ENCODE measurements at regions of chr16 and their contacts with region 1.

Region 1: DNA sequence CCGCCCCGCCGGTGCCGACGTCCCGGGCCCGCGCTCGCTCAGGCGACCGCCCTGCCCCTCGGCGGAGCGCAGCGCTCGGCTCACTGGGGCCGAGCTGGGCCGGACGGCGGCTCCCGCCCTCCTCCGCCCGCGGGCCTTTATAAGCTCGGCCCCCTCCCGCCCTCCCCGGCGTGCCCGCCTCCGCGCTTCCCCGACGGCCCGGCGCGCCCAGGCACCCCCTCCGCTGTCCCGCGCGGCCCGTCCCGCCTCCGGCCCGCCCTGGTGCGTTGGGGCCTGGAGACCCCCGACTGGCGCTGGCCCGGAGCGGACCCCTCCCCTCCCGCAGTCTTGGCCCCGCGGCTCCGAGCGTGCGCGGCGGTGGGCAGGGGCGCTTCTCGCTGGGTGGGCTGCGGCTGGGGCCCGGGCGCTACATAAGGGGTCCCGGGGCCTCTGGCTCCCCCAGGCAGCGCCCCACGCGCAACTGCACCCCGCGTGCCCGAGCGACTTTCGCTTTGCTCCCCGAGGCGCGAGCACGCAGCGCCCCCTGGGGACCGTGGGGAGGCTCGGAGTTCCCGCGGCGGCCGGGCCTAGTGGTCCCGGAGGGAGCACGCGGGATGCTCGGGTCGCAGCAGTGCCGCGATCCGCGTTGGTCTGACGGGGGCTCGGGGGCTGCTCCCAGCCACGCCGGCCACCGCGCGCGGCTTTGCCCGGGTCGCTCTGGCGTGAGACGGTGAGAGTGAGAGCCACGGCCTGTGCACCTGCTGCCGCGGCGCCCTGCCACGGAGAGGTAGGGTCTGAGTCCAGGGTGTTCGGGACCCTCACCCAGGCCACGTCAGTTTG is at the start of gene PIEZO1:
- DNase-seq: peak; percentile 77
- H3K4me3 Mint-ChIP-seq: peak within 1 kb of the TSS; percentile 65
- H3K27ac Mint-ChIP-seq: peak within 1 kb of the TSS; percentile 78
- H3K4me1 Mint-ChIP-seq: peaks cover 42% of the 10 kb centered on the region
- H3K27me3 Mint-ChIP-seq: no peaks in the 10 kb centered on the region
- total RNA-seq, gene PIEZO1: 78.2 to 80.1 TPM

Region 2: GRCh38 chr16:88650749-88651275 is 134.5 kb before region 1 on chr16 and contains the start of gene CYBA:
- CTCF ChIA-PET with region 1: no interaction called
- intact Hi-C with region 1: loop called (anchors 1 kb)
- DNase-seq: peak; percentile 91
- H3K4me3 Mint-ChIP-seq: peak within 1 kb of the TSS; percentile 87
- H3K27ac Mint-ChIP-seq: peak within 1 kb of the TSS; percentile 95
- H3K4me1 Mint-ChIP-seq: peaks cover 18% of the 10 kb centered on the region
- H3K27me3 Mint-ChIP-seq: no peaks in the 10 kb centered on the region
- total RNA-seq, gene CYBA: 167 to 180 TPM

Region 3: GRCh38 chr16:88700636-88701482 is 84.5 kb before region 1 on chr16:
- CTCF ChIA-PET with region 1: interaction called, 5 read pairs
- intact Hi-C with region 1: loop called (anchors 1 kb)
- DNase-seq: peak; percentile 98
- H3K4me3 Mint-ChIP-seq: peak overlapping the region; percentile 84
- H3K27ac Mint-ChIP-seq: peak overlapping the region; percentile 98
- H3K4me1 Mint-ChIP-seq: peaks cover 71% of the 10 kb centered on the region
- H3K27me3 Mint-ChIP-seq: no peaks in the 10 kb centered on the region

Region 4: GRCh38 chr16:88737298-88738150 is 47.8 kb before region 1 on chr16:
- CTCF ChIA-PET with region 1: interaction called, 48 read pairs
- intact Hi-C with region 1: loop called (anchors 1 kb)
- DNase-seq: peak; percentile 79
- H3K4me3 Mint-ChIP-seq: no peak overlapping the region
- H3K27ac Mint-ChIP-seq: no peak overlapping the region
- H3K4me1 Mint-ChIP-seq: peaks cover 3% of the 10 kb centered on the region
- H3K27me3 Mint-ChIP-seq: no peaks in the 10 kb centered on the region

Region 5: DNA sequence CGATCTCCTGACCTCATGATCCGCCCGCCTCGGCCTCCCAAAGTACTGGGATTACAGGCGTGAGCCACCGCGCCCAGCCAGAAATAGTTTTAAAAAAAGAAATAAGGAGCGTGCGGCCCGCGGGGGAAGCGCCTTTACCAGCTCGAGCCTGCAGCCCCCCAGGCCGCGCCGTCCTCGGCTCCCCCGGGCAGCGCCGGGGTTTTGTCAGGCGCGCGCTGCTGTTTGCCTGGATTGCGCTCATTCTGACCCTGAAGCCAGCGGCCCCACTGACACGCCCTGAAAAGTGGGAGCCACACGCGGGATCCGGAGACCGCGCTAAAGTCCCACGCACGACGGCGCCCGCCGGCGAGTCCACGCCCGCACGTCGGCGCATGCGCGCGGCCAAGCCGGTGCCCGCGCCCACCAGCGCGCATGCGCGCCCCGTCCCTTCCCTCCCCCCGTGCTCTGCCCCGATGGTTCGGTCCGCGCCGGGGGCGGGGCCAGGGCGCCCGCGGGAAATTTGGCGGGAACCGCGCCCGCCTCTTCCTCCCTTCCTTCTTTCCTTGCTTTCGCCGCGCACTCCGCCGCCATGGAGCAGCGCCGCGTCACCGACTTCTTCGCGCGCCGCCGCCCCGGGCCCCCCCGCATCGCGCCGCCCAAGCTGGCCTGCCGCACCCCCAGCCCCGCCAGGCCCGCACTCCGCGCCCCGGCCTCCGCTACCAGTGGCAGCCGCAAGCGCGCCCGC is 18.1 kb after region 1 on chr16 and contains the start of gene CDT1:
- CTCF ChIA-PET with region 1: interaction called, 5 read pairs
- intact Hi-C with region 1: loop called (anchors 1 kb)
- DNase-seq: peak; percentile 82
- H3K4me3 Mint-ChIP-seq: peak within 1 kb of the TSS; percentile 79
- H3K27ac Mint-ChIP-seq: peak within 1 kb of the TSS; percentile 91
- H3K4me1 Mint-ChIP-seq: peaks cover 33% of the 10 kb centered on the region
- H3K27me3 Mint-ChIP-seq: no peaks in the 10 kb centered on the region
- total RNA-seq, gene CDT1: 223 to 231 TPM

Region 6: DNA sequence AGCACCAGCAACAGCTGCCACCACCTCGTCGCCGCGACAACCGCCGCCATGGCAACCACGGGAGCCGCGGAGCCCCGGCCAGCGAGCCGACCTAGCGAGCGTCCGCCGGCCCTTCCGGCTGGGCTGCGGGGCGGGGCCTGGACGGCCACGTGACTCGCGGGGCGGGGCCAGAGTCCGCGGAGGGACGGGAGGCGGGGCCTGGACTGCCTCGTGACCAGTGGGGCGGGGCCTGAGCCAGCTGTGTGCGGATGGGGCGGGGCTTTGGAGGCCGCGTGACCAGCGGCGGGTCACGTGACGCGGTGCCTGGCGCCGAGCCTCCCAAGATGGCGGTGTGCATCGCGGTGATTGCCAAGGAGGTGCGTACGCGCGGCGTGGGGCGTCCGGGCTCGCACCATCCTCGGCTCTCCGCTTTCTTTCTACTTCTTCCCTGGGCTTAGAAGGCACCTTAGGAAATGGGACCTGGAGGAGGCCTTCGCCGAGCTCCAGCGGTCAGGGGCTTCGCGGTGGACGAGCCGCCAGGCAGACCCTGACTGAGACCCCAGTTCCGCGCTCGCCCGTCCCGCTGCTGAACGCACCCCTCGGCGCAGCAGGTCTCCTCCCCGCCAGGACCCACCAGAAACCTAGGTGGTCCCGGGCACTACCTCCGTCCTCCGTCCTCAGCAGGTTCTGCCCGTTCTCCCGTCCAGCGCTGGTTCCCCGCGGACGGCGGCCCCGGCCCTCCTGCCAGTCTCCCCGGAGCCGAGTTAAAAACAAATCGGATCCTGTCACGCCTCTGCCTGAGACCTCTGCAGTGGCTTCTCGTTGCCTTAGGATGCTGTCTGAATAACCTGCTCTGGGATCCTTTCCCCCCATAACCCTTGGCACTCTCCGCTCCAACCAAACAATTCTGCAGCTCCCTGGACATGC is 71.8 kb after region 1 on chr16 and contains the starts of genes GALNS and TRAPPC2L:
- CTCF ChIA-PET with region 1: interaction called, 5 read pairs
- intact Hi-C with region 1: loop called (anchors 2 kb)
- DNase-seq: peak; percentile 99
- H3K4me3 Mint-ChIP-seq: peak within 1 kb of the TSS; percentile 88
- H3K27ac Mint-ChIP-seq: peak within 1 kb of the TSS; percentile 63
- H3K4me1 Mint-ChIP-seq: peaks cover 23% of the 10 kb centered on the region
- H3K27me3 Mint-ChIP-seq: no peaks in the 10 kb centered on the region
- total RNA-seq, gene GALNS: 10.9 to 11.2 TPM
- total RNA-seq, gene TRAPPC2L: 57.7 to 66.1 TPM

Measured in activated naive CD4-positive, alpha-beta T cell treated with anti-CD3 and anti-CD28 coated beads for 36 hours (primary cell).